IMR-90 (cell line): ENCODE measurements at regions of chr18 and their contacts with region 1.

Region 1: DNA sequence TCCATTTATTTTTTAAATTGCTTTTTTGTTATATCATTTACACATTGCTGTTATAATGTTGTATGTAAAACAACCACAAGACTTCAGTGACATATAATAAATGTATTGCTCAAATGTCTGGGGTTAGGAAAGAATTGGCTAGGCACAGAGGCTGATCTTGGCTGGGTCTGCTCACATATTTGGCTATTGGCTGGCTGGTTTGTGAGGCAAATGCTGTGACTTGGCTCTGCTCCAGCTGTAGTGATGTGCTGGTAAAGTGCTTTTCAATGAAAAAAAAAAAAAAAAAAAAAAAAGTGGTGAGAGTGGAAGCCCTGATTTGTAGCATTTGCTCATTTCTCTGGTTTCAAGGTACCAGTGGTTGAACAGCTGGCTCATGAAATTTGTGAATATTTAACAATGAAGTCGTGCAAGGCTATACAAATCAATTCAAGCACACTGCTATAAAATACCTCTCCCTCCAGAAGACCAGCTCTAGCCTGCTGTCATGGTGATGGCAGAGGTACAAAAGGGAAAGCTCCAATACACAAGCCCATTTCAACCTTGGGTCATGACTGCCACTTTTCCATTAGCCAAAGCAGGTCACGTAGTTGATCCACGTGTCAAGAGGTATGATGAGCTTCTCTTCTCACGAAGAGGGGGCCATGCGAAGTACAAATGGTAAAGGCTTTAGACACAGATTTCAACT is 43.7 kb upstream of the RIT2 start:
- DNase-seq: no peak
- ATAC-seq: no peak
- H3K4me3 ChIP-seq: no peak overlapping the region
- H3K27ac ChIP-seq: no peak overlapping the region
- H3K4me1 ChIP-seq: no peaks in the 10 kb centered on the region
- H3K27me3 ChIP-seq: no peaks in the 10 kb centered on the region
- CTCF ChIP-seq: no peak
- POLR2A ChIP-seq: no peak
- RAD21 ChIP-seq: no peak

Region 2: GRCh38 chr18:43129946-43130524 is 29.2 kb before region 1 on chr18:
- CTCF ChIA-PET with region 1: no interaction called
- POLR2A ChIA-PET with region 1: no interaction called
- dilution Hi-C with region 1: no loop called
- in situ Hi-C with region 1: no loop called
- intact Hi-C with region 1: loop called (anchors 1 kb)
- DNase-seq: no peak
- ATAC-seq: no peak
- H3K4me3 ChIP-seq: no peak overlapping the region
- H3K27ac ChIP-seq: no peak overlapping the region
- H3K4me1 ChIP-seq: no peaks in the 10 kb centered on the region
- H3K27me3 ChIP-seq: no peaks in the 10 kb centered on the region
- CTCF ChIP-seq: no peak
- POLR2A ChIP-seq: no peak
- RAD21 ChIP-seq: no peak

Region 3: DNA sequence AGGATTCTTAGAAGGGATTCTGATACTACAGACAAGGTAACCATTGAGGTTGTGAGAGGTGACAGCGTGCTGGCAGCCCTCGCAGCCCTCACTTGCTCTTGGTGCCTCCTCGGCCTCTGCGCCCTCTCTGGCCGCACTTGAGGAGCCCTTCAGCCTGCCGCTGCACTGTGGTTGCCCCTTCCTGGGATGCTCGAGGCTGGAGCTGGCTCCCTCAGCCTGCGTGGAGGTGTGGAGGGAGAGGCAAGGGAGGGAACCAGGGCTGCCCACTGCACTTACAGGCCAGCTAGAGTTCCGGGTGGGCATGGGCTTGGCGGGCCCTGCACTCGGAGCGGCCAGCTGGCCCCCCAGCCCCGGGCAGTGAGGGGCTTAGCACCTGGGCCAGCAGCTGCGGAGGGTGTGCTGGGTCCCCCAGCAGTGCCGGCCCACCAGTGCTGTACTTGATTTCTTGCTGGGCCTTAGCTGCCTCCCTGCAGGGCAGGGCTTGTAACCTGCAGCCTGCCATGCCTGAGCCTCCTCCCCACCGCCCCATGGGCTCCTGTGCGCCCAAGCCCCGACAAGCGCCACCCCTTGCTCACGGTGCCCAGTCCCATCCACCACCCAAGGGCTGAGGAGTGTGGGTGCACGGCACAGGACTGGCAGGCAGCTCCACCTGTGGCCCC is 19.8 kb before region 1 on chr18:
- CTCF ChIA-PET with region 1: no interaction called
- POLR2A ChIA-PET with region 1: no interaction called
- dilution Hi-C with region 1: no loop called
- in situ Hi-C with region 1: no loop called
- intact Hi-C with region 1: loop called (anchors 2 kb)
- DNase-seq: no peak
- ATAC-seq: no peak
- H3K4me3 ChIP-seq: no peak overlapping the region
- H3K27ac ChIP-seq: no peak overlapping the region
- H3K4me1 ChIP-seq: no peaks in the 10 kb centered on the region
- H3K27me3 ChIP-seq: no peaks in the 10 kb centered on the region
- CTCF ChIP-seq: no peak
- POLR2A ChIP-seq: no peak
- RAD21 ChIP-seq: no peak